Caco-2 (cell line): ENCODE measurements at regions of chr12 and their contacts with region 1.

Region 1: DNA sequence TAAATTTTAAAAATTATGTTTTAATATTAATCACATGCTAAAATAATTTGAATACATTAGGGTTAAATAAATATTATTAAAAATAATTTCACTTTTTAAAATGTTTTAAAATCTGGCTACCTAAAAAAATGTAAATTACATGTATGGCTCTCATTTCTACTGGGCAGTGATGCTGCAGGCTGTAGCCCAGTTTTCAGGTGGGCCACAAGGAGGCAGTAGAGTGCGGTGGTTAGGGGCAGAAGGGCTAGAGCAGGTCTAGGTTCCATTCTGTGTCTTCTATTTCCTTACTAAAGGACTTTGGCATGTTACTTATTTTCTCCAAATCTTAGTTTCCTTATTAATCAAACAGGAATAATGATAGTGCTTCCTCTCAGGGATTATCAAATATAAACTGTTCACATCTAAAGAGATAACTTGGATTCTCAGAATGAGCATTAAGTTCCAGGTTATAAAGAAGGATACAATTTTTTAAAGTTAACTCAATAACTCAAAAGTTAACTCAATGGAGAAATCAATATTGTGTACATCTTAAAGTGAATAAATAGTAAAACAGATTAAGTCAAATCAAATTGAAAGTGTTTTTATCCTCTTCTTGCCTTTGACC is 54.9 kb upstream of the OVCH1 start:
- DNase-seq: peak; percentile 68 to 77
- H3K4me3 ChIP-seq: no peak overlapping the region
- H3K4me3 Mint-ChIP-seq: no peak overlapping the region
- H3K27ac Mint-ChIP-seq: no peak overlapping the region
- H3K4me1 ChIP-seq: no peaks in the 10 kb centered on the region
- H3K4me1 Mint-ChIP-seq: no peaks in the 10 kb centered on the region
- H3K27me3 ChIP-seq: no peaks in the 10 kb centered on the region
- H3K27me3 Mint-ChIP-seq: peaks cover 10% of the 10 kb centered on the region
- CTCF ChIP-seq: peak; percentile 88 to 92

Region 2: GRCh38 chr12:29634057-29634456 is 81.6 kb after region 1 on chr12:
- CTCF ChIA-PET with region 1: no interaction called
- POLR2A ChIA-PET with region 1: no interaction called
- intact Hi-C with region 1: loop called (anchors 2 kb)
- DNase-seq: no peak
- H3K4me3 ChIP-seq: no peak overlapping the region
- H3K4me3 Mint-ChIP-seq: no peak overlapping the region
- H3K27ac Mint-ChIP-seq: no peak overlapping the region
- H3K4me1 ChIP-seq: no peaks in the 10 kb centered on the region
- H3K4me1 Mint-ChIP-seq: no peaks in the 10 kb centered on the region
- H3K27me3 ChIP-seq: no peaks in the 10 kb centered on the region
- H3K27me3 Mint-ChIP-seq: no peaks in the 10 kb centered on the region
- CTCF ChIP-seq: no peak

Region 3: DNA sequence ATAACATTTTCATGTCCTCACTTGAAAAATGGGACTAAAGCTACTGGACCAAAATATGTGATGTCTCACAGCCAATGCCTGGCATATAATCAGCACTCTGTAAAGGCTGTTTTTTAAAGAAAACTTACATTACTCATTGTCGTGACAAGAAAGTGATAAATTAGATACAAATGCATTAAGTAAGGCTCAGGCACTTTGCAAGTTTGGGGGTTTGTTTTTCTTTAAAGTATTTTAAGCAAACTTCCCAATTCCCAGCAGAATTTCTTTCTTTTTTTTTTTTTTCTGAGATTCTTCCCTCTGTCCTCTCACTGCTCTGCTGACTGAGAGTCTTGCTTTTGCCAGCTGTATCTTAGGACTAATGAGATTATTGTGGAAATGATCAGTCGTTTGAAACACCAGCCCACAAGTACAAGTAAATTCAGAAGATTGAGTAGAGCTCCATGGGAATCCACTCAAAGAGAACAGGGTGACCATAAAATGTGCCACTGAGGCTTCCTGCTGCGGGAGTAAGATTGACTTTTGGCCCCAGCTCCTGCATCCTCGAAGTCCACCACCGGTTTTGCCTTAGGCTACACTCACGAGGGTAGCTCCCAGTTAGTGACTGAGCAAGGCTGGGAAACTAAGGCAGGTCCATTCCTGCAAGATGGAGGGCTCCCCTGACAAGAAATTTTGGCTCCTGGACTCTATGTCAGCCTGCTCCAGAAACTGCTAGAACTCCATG is 148.5 kb after region 1 on chr12:
- CTCF ChIA-PET with region 1: no interaction called
- POLR2A ChIA-PET with region 1: no interaction called
- intact Hi-C with region 1: loop called (anchors 10 kb)
- DNase-seq: no peak
- H3K4me3 ChIP-seq: no peak overlapping the region
- H3K4me3 Mint-ChIP-seq: no peak overlapping the region
- H3K27ac Mint-ChIP-seq: no peak overlapping the region
- H3K4me1 ChIP-seq: no peaks in the 10 kb centered on the region
- H3K4me1 Mint-ChIP-seq: no peaks in the 10 kb centered on the region
- H3K27me3 ChIP-seq: no peaks in the 10 kb centered on the region
- H3K27me3 Mint-ChIP-seq: peaks cover 9% of the 10 kb centered on the region
- CTCF ChIP-seq: no peak

Region 4: DNA sequence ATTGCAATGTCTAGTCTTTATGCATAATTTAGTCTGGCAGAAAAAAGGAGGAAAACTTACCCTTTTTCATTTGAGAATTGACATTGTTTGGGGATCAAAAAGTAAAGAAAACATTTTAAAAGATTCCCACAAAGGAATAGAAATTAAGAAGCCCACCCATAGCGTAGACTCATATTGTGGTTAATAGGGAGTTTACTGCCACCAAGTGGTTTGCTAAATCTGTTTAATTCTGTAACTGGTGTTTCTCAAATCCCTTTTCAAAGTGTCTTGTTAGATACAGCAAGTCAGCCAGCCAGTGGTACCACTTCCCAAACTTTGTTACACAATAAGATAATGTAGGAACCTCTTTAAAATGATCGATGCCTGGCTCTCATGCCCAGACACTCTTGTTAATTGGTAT is 962.9 kb after region 1 on chr12:
- CTCF ChIA-PET with region 1: no interaction called
- POLR2A ChIA-PET with region 1: no interaction called
- intact Hi-C with region 1: loop called (anchors 1 kb)
- DNase-seq: no peak
- H3K4me3 ChIP-seq: no peak overlapping the region
- H3K4me3 Mint-ChIP-seq: no peak overlapping the region
- H3K27ac Mint-ChIP-seq: no peak overlapping the region
- H3K4me1 ChIP-seq: no peaks in the 10 kb centered on the region
- H3K4me1 Mint-ChIP-seq: no peaks in the 10 kb centered on the region
- H3K27me3 ChIP-seq: no peaks in the 10 kb centered on the region
- H3K27me3 Mint-ChIP-seq: no peaks in the 10 kb centered on the region
- CTCF ChIP-seq: peak in 1 of 2 experiments; percentile 19

Region 5: GRCh38 chr12:30806989-30807694 is 1254.7 kb after region 1 on chr12:
- CTCF ChIA-PET with region 1: no interaction called
- POLR2A ChIA-PET with region 1: no interaction called
- intact Hi-C with region 1: loop called (anchors 1 kb)
- DNase-seq: peak in 1 of 2 experiments; percentile 74
- H3K4me3 ChIP-seq: no peak overlapping the region
- H3K4me3 Mint-ChIP-seq: no peak overlapping the region
- H3K27ac Mint-ChIP-seq: no peak overlapping the region
- H3K4me1 ChIP-seq: no peaks in the 10 kb centered on the region
- H3K4me1 Mint-ChIP-seq: no peaks in the 10 kb centered on the region
- H3K27me3 ChIP-seq: no peaks in the 10 kb centered on the region
- H3K27me3 Mint-ChIP-seq: peaks cover 6% of the 10 kb centered on the region
- CTCF ChIP-seq: peak; percentile 80 to 94